ENCODE measurements at regions of chr6 and their contacts with region 1.

Region 1: GRCh38 chr6:106223300-106223930 is 102.1 kb downstream of the ATG5 start:
- DNase-seq: peak; percentile 79
- ATAC-seq: peak; percentile 68
- H3K4me3 ChIP-seq: no peak overlapping the region
- H3K27ac ChIP-seq: no peak overlapping the region
- H3K4me1 ChIP-seq: no peaks in the 10 kb centered on the region
- H3K27me3 ChIP-seq: no peaks in the 10 kb centered on the region
- CTCF ChIP-seq: peak; percentile 80
- POLR2A ChIP-seq: 0 out of 2 replicates have a peak, but pooled peaks have one; percentile 36
- RAD21 ChIP-seq: peak; percentile 93

Region 2: DNA sequence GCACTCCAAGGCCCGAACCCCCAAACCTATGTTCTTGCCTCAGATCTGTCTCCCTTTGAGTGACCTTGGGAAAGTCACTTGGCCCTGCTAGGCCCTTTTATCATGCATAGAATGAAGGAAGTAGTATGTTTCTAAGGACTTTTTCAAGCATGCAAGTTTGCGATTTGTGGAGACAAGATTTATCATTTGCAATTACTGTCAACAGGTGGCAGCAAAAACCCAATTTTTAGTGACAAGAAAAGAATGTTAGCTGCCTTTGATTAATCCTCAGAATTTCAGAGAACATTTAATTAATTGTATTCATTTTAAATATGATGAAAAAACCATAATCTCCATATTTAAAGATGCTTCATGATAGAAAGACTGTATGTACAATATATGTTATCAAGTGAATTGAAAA is 792.2 kb before region 1 on chr6:
- CTCF ChIA-PET with region 1: interaction called, 3 read pairs
- POLR2A ChIA-PET with region 1: no interaction called
- dilution Hi-C with region 1: no loop called
- in situ Hi-C with region 1: no loop called
- intact Hi-C with region 1: loop called (anchors 5 kb)
- DNase-seq: peak; percentile 68
- ATAC-seq: no peak
- H3K4me3 ChIP-seq: no peak overlapping the region
- H3K27ac ChIP-seq: no peak overlapping the region
- H3K4me1 ChIP-seq: peaks cover 23% of the 10 kb centered on the region
- H3K27me3 ChIP-seq: no peaks in the 10 kb centered on the region
- CTCF ChIP-seq: peak; percentile 70
- POLR2A ChIP-seq: no peak
- RAD21 ChIP-seq: peak; percentile 61

Measured in IMR-90 (cell line).